Naive thymus-derived CD8-positive, alpha-beta T cell (primary cell): ENCODE measurements at regions of chrX and their contacts with region 1.

Region 1: GRCh38 chrX:13029341-13029740 is 15.1 kb downstream of the FAM9C start:
- DNase-seq: peak in 2 of 10 donors; percentile 6 to 23
- ATAC-seq: peak; percentile 30 to 43
- H3K4me3 Mint-ChIP-seq: peak overlapping the region in 9 of 10 donors; percentile 39 to 80 (median 67)
- H3K27ac Mint-ChIP-seq: peak overlapping the region; percentile 80 to 98 (median 93)
- H3K4me1 Mint-ChIP-seq: peaks cover 27 to 79% (median 65%) of the 10 kb centered on the region in 4 donors
- H3K27me3 Mint-ChIP-seq: no peaks in the 10 kb centered on the region

Region 2: GRCh38 chrX:12946838-12947544 is 82.3 kb before region 1 on chrX:
- POLR2A ChIA-PET with region 1: interaction called, 14 read pairs
- DNase-seq: peak; percentile 38 to 95 (median 73)
- ATAC-seq: peak in 1 of 2 donors; percentile 11
- H3K4me3 Mint-ChIP-seq: peak overlapping the region; percentile 19 to 82 (median 68)
- H3K27ac Mint-ChIP-seq: peak overlapping the region; percentile 37 to 99 (median 96)
- H3K4me1 Mint-ChIP-seq: peaks cover 10 to 57% (median 50%) of the 10 kb centered on the region in 4 donors
- H3K27me3 Mint-ChIP-seq: no peaks in the 10 kb centered on the region

Region 3: DNA sequence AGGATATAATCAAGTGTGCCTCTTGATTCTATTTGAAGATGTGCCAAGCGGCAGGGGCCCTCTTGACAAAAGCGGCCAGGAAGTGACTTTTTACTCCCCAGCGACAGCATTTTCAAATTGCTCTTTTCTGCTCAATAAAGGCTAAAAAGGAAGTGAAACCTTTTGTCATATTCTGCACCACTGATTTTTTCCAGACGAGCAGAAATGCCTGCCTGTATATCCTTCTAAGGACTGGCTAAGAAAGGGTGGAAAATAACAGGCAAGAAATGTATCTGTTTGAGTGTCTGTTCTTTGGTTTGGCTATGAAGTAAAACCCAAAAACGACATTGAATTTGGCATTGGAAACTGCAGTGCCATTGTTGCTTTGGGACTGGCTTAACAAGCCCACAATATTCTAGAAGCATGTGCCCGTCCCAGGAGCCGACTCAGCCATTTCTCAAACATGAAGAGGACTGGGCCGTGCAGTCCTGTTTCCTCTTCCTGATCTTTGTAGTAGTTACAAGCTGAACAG is 29.0 kb before region 1 on chrX:
- POLR2A ChIA-PET with region 1: interaction called, 10 read pairs
- DNase-seq: peak in 7 of 10 donors; percentile 32 to 79 (median 54)
- ATAC-seq: peak; percentile 61 to 68
- H3K4me3 Mint-ChIP-seq: peak overlapping the region; percentile 65 to 90 (median 82)
- H3K27ac Mint-ChIP-seq: peak overlapping the region; percentile 83 to 100 (median 96)
- H3K4me1 Mint-ChIP-seq: peaks cover 9 to 77% (median 62%) of the 10 kb centered on the region in 4 donors
- H3K27me3 Mint-ChIP-seq: no peaks in the 10 kb centered on the region

Region 4: DNA sequence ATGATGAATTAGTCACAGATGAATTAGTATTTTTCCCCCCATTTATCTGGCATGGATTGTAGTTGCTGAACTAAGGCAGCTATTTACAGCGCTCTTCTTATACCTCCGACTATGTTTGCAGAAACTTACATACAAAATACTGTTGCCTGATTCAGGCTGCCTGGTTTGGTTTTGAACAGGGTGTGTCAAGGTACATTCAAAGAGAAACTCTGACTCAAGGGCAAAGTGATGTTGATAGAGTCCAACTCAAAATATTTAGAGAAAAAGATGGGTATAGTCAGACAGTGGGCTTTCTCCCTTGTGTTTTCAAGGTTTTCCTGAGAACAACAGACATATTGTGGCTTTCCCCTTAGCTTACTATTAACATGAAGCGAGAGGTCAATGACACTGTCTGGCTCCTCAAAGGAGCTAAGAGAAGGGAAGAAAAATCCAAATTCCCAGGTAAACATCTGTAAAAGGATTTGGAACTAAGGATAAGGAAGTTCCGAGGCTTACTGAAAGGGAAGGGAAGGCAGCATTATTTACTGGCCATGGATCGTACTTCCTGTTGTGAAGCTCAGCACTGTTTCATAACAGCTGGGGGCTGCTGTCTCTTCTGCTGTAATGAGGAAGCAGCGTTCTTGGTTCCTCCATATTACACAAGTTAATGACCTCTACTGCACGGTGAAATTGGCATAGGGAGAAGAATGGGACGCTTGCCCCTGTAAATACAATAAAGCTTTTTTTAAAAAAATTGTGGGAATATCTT is 15.8 kb before region 1 on chrX:
- POLR2A ChIA-PET with region 1: interaction called, 21 read pairs
- DNase-seq: peak in 2 of 10 donors; percentile 26 to 34
- ATAC-seq: peak; percentile 82 to 84
- H3K4me3 Mint-ChIP-seq: peak overlapping the region; percentile 1 to 71 (median 56)
- H3K27ac Mint-ChIP-seq: peak overlapping the region; percentile 35 to 99 (median 89)
- H3K4me1 Mint-ChIP-seq: peaks cover 10 to 70% (median 60%) of the 10 kb centered on the region in 4 donors
- H3K27me3 Mint-ChIP-seq: no peaks in the 10 kb centered on the region

Region 5: GRCh38 chrX:13043144-13043543 is 13.8 kb after region 1 on chrX:
- POLR2A ChIA-PET with region 1: interaction called, 59 read pairs
- DNase-seq: no peak
- ATAC-seq: no peak
- H3K4me3 Mint-ChIP-seq: no peak overlapping the region
- H3K27ac Mint-ChIP-seq: peak overlapping the region in 6 of 10 donors; percentile 7 to 93 (median 56)
- H3K4me1 Mint-ChIP-seq: peaks cover 5 to 47% (median 44%) of the 10 kb centered on the region in 4 donors
- H3K27me3 Mint-ChIP-seq: no peaks in the 10 kb centered on the region

Region 6: DNA sequence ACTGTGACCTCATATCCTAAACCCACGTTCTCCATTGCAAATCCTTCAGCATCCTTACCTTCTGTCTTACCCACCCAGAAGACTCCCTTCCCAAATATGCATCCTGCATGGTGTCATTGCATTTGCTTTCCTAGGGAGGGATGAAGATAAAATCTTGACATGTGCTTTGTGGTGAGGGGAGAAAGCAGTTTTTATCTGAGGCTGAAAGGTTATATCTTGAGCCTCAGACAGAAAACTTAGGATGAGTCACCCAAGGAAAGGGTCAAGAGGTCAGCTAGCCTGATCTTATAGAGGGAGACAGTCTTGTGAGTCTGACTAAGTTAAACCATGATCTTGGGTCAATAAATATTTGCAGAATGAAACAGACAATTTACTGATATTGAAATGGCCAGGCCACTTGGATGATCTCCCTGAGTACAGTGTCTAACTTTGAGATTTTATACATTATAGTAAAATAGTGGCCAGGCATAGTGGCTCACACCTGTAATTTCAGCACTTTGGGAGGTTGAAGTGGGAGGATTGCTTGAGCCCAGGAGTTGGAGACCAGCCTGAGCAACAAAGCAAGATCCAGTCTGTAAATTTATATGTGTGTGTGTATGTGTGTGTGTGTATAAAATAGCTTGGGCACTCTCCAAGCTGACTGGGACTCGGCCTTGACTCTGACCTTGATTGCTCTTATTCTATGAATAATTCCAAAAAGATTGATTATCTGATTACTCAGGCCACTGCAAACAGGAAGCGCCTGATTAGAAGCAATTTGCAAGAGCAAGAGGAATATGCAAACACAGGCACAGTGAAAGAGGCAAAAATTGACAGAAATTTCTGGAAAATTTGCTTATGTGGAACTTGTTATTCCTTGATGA is 30.5 kb after region 1 on chrX:
- POLR2A ChIA-PET with region 1: no interaction called
- DNase-seq: no peak
- ATAC-seq: no peak
- H3K4me3 Mint-ChIP-seq: no peak overlapping the region
- H3K27ac Mint-ChIP-seq: peak overlapping the region in 4 of 10 donors; percentile 25 to 67 (median 40)
- H3K4me1 Mint-ChIP-seq: peaks cover 19 to 63% (median 49%) of the 10 kb centered on the region in 4 donors
- H3K27me3 Mint-ChIP-seq: no peaks in the 10 kb centered on the region

Region 7: DNA sequence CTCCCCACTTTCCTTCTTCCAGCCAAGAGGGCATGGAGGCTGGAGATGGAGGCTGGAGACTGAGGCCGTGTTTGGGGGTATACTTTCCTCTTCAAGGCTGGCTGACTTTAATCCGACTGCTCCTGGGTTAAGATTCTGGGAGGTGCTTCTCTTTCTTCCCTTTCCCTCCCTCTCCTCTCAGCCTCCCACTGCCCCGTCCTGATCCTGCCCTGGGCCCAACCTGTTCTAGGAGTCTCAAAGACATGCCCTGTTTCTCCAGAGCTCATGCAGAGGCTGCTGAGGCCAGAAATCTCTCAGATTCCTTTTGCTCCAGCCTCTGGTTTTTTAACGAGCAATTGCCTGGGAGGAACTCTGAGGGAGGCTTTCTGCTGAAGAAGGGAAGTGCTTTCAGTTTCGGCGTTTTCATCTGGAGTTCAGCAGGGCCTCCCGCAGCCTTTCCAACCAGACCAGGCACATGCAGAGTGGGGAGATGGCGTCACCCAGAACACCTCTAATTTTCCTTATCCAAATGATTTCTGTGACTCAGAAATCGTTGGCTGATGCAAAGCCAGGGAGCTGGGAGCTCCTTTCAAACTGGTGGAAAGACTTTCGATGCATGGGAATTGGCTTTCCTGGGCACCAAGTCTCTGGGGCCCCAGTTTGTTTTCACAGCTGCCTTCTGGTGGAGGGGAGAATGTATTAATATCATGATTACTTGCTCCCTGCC is 49.6 kb after region 1 on chrX:
- POLR2A ChIA-PET with region 1: interaction called, 30 read pairs
- DNase-seq: peak in 1 of 10 donors; percentile 12
- ATAC-seq: no peak
- H3K4me3 Mint-ChIP-seq: peak overlapping the region; percentile 48 to 77 (median 66)
- H3K27ac Mint-ChIP-seq: peak overlapping the region; percentile 92 to 97 (median 94)
- H3K4me1 Mint-ChIP-seq: peaks cover 24 to 92% (median 86%) of the 10 kb centered on the region in 4 donors
- H3K27me3 Mint-ChIP-seq: no peaks in the 10 kb centered on the region